ENCODE measurements at regions of chr3 and their contacts with region 1.

Region 1: GRCh38 chr3:69385723-69386555 is at the start of gene FRMD4B:
- DNase-seq: peak; percentile 81
- H3K4me3 Mint-ChIP-seq: peak within 1 kb of the TSS; percentile 82
- H3K27ac Mint-ChIP-seq: no peak within 1 kb of the TSS
- H3K4me1 Mint-ChIP-seq: peaks cover 8% of the 10 kb centered on the region
- H3K27me3 Mint-ChIP-seq: peaks cover 11% of the 10 kb centered on the region
- CTCF ChIP-seq: no peak
- total RNA-seq, gene FRMD4B: 13.8 and 16.7 TPM in 2 replicates

Region 2: GRCh38 chr3:69324362-69325025 is 61.4 kb before region 1 on chr3:
- CTCF ChIA-PET with region 1: no interaction called
- intact Hi-C with region 1: loop called (anchors 5 kb)
- DNase-seq: no peak
- H3K4me3 Mint-ChIP-seq: no peak overlapping the region
- H3K27ac Mint-ChIP-seq: no peak overlapping the region
- H3K4me1 Mint-ChIP-seq: peaks cover 9% of the 10 kb centered on the region
- H3K27me3 Mint-ChIP-seq: no peaks in the 10 kb centered on the region
- CTCF ChIP-seq: no peak

Region 3: GRCh38 chr3:69682878-69683806 is 297.2 kb after region 1 on chr3:
- CTCF ChIA-PET with region 1: no interaction called
- intact Hi-C with region 1: no loop called
- DNase-seq: no peak
- H3K4me3 Mint-ChIP-seq: no peak overlapping the region
- H3K27ac Mint-ChIP-seq: no peak overlapping the region
- H3K4me1 Mint-ChIP-seq: peaks cover 16% of the 10 kb centered on the region
- H3K27me3 Mint-ChIP-seq: no peaks in the 10 kb centered on the region
- CTCF ChIP-seq: no peak